ENCODE measurements at regions of chr15 and their contacts with region 1.

Region 1: GRCh38 chr15:50496692-50497091 is 49.8 kb downstream of the USP50 start:
- DNase-seq: peak; percentile 8
- H3K4me3 ChIP-seq: no peak overlapping the region
- H3K27ac ChIP-seq: no peak overlapping the region
- H3K4me1 ChIP-seq: no peaks in the 10 kb centered on the region
- H3K27me3 ChIP-seq: no peaks in the 10 kb centered on the region
- CTCF ChIP-seq: no peak

Region 2: DNA sequence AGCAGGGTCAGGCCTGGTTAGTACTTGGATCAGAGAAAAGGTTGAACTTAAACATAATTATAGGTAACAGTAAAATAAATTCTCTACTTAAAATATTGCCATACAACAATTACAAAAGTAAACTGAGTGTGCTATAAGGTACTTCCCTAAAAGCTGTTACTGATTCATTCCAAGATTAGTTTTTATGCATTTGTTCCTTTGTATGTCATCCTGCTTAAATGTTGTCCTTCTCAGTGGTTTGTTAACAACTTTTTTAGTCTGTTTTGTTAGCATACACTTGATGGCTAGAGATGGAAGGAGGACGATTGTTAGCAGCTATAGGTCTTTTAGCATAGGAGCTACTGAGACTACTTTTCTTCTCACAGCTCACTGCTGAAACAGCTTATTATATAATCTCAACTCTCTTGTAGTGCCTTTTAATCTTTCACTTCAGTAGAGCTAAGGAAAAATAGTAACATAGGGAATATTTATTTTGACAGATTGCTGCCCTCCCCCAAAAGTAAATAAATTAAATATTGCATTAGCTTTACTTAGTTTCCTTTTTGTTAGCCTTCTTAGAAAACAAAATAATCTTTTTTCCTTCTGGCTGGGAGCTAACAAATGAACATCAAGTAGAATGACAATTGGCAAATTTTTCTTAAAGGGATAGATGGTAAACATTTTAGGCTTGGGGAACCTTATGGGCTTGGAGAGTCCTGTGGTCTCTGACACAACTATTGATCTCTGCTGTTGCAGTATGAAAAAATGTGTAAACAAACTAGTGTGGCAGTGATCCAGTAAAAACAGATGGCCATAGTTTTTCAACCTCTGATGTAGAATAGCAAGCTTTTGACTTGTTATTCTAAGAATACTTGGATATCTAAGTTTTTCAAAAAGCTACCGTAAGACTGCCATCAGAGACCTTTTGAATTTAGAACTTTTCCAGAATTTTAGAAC is 33.0 kb before region 1 on chr15:
- CTCF ChIA-PET with region 1: no interaction called
- dilution Hi-C with region 1: loop called (anchors 5 kb)
- in situ Hi-C with region 1: no loop called
- intact Hi-C with region 1: no loop called
- DNase-seq: no peak
- H3K4me3 ChIP-seq: no peak overlapping the region
- H3K27ac ChIP-seq: no peak overlapping the region
- H3K4me1 ChIP-seq: no peaks in the 10 kb centered on the region
- H3K27me3 ChIP-seq: no peaks in the 10 kb centered on the region
- CTCF ChIP-seq: no peak

Region 3: DNA sequence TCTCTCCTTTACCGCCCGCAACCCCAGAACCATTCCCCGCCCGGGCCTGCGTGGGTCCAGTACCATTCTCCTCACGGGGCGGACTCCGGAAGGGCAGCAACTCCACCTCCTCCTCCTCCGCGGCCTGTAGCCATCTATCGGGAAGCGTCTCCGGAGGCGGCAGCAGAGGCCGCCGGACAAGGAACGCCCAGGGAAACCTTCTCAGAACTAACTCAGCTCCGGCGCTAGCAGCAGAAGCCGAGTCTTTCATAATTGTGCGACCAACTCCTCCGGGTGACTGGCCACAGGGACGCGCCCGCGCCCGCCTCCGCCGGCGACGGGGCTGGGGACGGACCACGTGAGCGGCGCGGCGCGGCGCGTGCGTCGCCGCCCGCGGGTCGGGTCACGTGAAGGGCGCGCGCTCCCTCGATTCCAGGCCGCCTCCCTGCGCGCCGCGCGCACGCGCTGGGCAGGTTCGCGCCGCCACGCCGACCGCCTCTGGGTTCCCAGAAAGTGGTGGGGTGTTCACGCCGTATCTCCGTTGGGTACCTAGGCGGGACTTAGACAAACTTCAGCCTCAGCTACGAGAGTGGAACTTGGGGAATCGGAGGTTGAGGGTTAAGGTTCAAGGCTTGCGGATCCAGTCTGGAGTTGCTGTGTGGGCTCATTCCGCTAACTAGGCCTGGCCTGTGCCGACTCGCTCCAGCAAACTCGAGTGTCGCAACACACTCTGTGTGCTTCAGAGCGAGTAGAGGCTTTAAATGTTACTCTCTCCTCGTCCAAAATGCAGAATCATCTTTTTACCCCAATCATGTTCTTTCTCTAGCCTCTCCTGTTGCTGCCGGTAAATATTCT is 190.0 kb after region 1 on chr15 and contains the start of gene TRPM7:
- CTCF ChIA-PET with region 1: no interaction called
- dilution Hi-C with region 1: no loop called
- in situ Hi-C with region 1: no loop called
- intact Hi-C with region 1: no loop called
- DNase-seq: peak; percentile 87
- H3K4me3 ChIP-seq: peak within 1 kb of the TSS; percentile 53 to 94 (median 64)
- H3K27ac ChIP-seq: peak within 1 kb of the TSS; percentile 62
- H3K4me1 ChIP-seq: peaks cover 23% of the 10 kb centered on the region
- H3K27me3 ChIP-seq: no peaks in the 10 kb centered on the region
- CTCF ChIP-seq: peak in 1 of 2 donors; percentile 28
- total RNA-seq, gene TRPM7: 35.6 to 64.8 TPM

Region 4: GRCh38 chr15:50765195-50765973 is 268.7 kb after region 1 on chr15 and contains the start of gene SPPL2A:
- CTCF ChIA-PET with region 1: no interaction called
- dilution Hi-C with region 1: no loop called
- in situ Hi-C with region 1: no loop called
- intact Hi-C with region 1: no loop called
- DNase-seq: peak; percentile 85
- H3K4me3 ChIP-seq: peak within 1 kb of the TSS; percentile 66 to 95 (median 90)
- H3K27ac ChIP-seq: peak within 1 kb of the TSS; percentile 84
- H3K4me1 ChIP-seq: peaks cover 5% of the 10 kb centered on the region
- H3K27me3 ChIP-seq: no peaks in the 10 kb centered on the region
- CTCF ChIP-seq: no peak
- total RNA-seq, gene SPPL2A: 76.8 to 107 TPM

Region 5: GRCh38 chr15:50890771-50891558 is 394.3 kb after region 1 on chr15:
- CTCF ChIA-PET with region 1: interaction called, 19 read pairs
- dilution Hi-C with region 1: no loop called
- in situ Hi-C with region 1: no loop called
- intact Hi-C with region 1: no loop called
- DNase-seq: no peak
- H3K4me3 ChIP-seq: no peak overlapping the region
- H3K27ac ChIP-seq: no peak overlapping the region
- H3K4me1 ChIP-seq: no peaks in the 10 kb centered on the region
- H3K27me3 ChIP-seq: no peaks in the 10 kb centered on the region
- CTCF ChIP-seq: no peak

Measured in mammary epithelial cell (primary cell).